CD4-positive, alpha-beta T cell (primary cell): ENCODE measurements at regions of chr19 and their contacts with region 1.

Region 1: DNA sequence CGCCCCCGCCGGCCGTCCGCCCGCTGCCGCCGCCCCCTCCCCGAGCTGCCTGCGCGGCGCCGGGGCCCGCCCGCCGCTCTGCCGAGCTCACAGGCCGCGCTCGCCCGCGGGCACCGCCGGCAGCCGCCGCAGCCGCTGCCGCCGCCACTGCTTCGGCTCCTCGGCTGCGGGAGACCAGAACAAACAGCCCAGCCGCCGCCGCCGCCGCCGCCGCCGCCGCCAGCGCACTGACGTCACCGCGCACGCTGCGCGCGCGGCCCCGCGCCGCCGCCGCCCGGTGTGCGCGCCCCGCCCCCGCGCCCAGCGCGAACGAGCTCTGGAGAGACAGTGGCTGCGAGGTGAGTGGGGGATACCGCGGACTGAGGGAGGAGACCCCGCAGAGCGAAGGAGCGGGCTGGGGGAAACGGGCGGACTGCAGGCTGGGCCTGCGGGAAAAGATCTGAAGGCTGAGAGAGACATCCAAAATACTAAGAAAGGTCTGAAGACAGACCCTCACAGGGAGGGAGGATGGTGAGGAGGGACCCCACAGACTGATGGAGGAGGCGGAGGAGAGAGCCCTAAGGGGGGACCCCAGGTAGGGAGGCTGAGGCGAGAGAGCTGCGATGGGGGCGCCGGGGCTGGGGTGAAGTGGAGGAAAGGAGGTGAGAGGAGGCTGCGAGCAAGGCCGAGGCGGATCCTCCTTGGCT is at the start of gene BRD4:
- DNase-seq: peak; percentile 59 to 92 (median 72)
- ATAC-seq: peak; percentile 63
- H3K4me3 ChIP-seq: peak within 1 kb of the TSS; percentile 90
- H3K4me3 Mint-ChIP-seq: peak within 1 kb of the TSS; percentile 96
- H3K27ac ChIP-seq: peak within 1 kb of the TSS; percentile 51 to 67
- H3K27ac Mint-ChIP-seq: peak within 1 kb of the TSS; percentile 88
- H3K4me1 ChIP-seq: peaks cover 45% of the 10 kb centered on the region
- H3K4me1 Mint-ChIP-seq: peaks cover 47% of the 10 kb centered on the region
- H3K27me3 ChIP-seq: no peaks in the 10 kb centered on the region
- H3K27me3 Mint-ChIP-seq: no peaks in the 10 kb centered on the region
- CTCF ChIP-seq: no peak
- total RNA-seq, gene BRD4: 101 to 102 TPM

Region 2: DNA sequence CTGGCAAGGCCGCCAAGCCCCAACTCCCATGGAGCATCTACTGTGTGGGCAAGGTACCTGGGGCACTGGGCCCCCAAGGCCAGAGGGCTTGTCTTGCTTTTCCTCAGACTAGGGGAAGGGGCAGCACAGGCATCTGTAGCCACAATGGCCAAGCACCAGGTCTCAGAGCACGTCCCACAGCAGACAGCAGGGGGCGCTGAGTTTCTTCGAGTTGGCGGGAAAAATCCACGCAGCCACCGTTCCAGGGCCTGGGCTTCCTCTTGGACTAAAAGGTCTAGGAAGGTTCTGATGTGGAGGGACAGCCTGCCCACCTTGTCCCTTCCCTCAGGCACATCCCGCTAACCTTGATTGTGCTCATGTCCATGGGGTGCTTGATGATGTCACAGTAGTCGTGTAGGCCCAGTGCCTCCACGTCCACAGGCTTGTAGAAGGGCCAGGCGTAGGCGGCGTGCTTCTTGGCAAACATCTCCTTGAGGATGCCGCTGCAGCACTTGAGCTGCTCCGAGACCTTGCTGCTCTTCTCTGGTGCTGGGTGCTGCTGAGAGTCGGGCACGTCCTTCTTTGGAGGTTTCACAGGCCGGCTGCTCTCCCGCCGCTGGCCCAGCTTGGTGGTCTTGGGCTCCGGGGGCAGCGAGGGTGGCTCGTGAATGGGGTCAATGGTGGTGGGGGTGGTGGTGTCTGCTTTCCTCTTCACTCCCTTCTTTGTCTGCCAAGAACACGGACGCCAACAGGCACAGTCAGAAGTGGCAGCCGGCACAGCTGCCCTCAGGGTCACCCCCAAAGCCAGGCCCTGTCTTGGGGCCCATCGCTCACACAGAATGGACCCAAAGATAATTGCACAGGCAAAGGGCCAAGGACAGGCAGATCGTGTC is 68.2 kb before region 1 on chr19:
- CTCF ChIA-PET with region 1: no interaction called
- POLR2A ChIA-PET with region 1: no interaction called
- intact Hi-C with region 1: loop called (anchors 2 to 5 kb)
- DNase-seq: peak; percentile 58 to 82 (median 66)
- ATAC-seq: peak; percentile 80
- H3K4me3 ChIP-seq: no peak overlapping the region
- H3K4me3 Mint-ChIP-seq: no peak overlapping the region
- H3K27ac ChIP-seq: no peak overlapping the region
- H3K27ac Mint-ChIP-seq: no peak overlapping the region
- H3K4me1 ChIP-seq: no peaks in the 10 kb centered on the region
- H3K4me1 Mint-ChIP-seq: peaks cover 13% of the 10 kb centered on the region
- H3K27me3 ChIP-seq: no peaks in the 10 kb centered on the region
- H3K27me3 Mint-ChIP-seq: no peaks in the 10 kb centered on the region
- CTCF ChIP-seq: peak; percentile 75

Region 3: DNA sequence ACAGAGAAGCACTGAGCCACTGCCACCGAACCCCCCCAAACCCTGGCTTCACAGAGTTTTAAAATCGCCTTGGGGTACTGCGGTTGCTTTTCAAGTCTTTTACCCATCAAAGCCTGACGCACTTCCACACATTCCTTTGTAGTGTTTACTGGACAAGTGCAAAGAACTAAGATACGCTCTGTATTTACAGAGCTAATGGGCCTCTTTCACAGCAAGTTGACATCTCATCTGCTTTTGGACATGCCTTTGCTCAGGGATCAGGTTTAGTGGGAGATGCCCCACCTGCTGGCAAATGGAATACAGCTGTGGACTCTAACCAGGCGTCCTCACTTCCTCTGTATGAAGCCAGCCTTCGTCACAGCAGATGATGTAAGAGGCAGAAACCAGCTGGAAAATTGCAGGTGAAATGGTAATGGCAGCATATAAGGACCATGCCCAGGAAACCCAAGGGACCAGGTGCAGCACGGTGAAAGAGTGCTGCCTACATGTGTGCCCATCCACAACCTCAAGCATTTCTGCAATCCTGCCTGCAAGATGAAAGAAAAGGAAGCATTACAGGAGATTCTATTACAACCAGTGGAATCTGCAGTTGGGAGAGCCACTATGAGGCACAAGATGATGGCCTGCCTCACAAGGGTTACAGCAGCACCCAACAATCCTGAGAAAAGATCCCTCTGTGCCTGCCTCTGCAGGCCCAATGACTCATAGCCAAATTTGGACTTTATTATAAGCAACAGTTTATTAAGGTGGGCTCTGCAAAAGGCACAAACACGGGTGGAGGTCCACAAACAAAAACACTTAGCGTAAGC is 34.8 kb before region 1 on chr19:
- CTCF ChIA-PET with region 1: no interaction called
- POLR2A ChIA-PET with region 1: interaction called, 4 read pairs
- intact Hi-C with region 1: loop called (anchors 2 kb)
- DNase-seq: peak in 4 of 14 experiments; percentile 23 to 53 (median 44)
- ATAC-seq: peak; percentile 52
- H3K4me3 ChIP-seq: no peak overlapping the region
- H3K4me3 Mint-ChIP-seq: peak overlapping the region; percentile 81
- H3K27ac ChIP-seq: no peak overlapping the region
- H3K27ac Mint-ChIP-seq: peak overlapping the region; percentile 64
- H3K4me1 ChIP-seq: peaks cover 89% of the 10 kb centered on the region
- H3K4me1 Mint-ChIP-seq: peaks cover 89% of the 10 kb centered on the region
- H3K27me3 ChIP-seq: no peaks in the 10 kb centered on the region
- H3K27me3 Mint-ChIP-seq: no peaks in the 10 kb centered on the region
- CTCF ChIP-seq: no peak

Region 4: GRCh38 chr19:15304140-15304705 is 28.2 kb before region 1 on chr19:
- CTCF ChIA-PET with region 1: no interaction called
- POLR2A ChIA-PET with region 1: interaction called, 3 read pairs
- intact Hi-C with region 1: loop called in 1 of 2 experiments (anchors 1 kb)
- DNase-seq: no peak
- ATAC-seq: peak; percentile 71
- H3K4me3 ChIP-seq: no peak overlapping the region
- H3K4me3 Mint-ChIP-seq: peak overlapping the region; percentile 36
- H3K27ac ChIP-seq: no peak overlapping the region
- H3K27ac Mint-ChIP-seq: peak overlapping the region; percentile 37
- H3K4me1 ChIP-seq: peaks cover 73% of the 10 kb centered on the region
- H3K4me1 Mint-ChIP-seq: peaks cover 76% of the 10 kb centered on the region
- H3K27me3 ChIP-seq: no peaks in the 10 kb centered on the region
- H3K27me3 Mint-ChIP-seq: no peaks in the 10 kb centered on the region
- CTCF ChIP-seq: no peak

Region 5: GRCh38 chr19:15318241-15318691 is 14.2 kb before region 1 on chr19:
- CTCF ChIA-PET with region 1: interaction called, 4 read pairs
- POLR2A ChIA-PET with region 1: interaction called, 13 read pairs
- intact Hi-C with region 1: no loop called
- DNase-seq: peak in 2 of 14 experiments; percentile 67 to 70
- ATAC-seq: peak; percentile 72
- H3K4me3 ChIP-seq: no peak overlapping the region
- H3K4me3 Mint-ChIP-seq: peak overlapping the region; percentile 38
- H3K27ac ChIP-seq: no peak overlapping the region
- H3K27ac Mint-ChIP-seq: peak overlapping the region; percentile 71
- H3K4me1 ChIP-seq: peaks cover 88% of the 10 kb centered on the region
- H3K4me1 Mint-ChIP-seq: peaks cover 89% of the 10 kb centered on the region
- H3K27me3 ChIP-seq: no peaks in the 10 kb centered on the region
- H3K27me3 Mint-ChIP-seq: no peaks in the 10 kb centered on the region
- CTCF ChIP-seq: no peak

Region 6: DNA sequence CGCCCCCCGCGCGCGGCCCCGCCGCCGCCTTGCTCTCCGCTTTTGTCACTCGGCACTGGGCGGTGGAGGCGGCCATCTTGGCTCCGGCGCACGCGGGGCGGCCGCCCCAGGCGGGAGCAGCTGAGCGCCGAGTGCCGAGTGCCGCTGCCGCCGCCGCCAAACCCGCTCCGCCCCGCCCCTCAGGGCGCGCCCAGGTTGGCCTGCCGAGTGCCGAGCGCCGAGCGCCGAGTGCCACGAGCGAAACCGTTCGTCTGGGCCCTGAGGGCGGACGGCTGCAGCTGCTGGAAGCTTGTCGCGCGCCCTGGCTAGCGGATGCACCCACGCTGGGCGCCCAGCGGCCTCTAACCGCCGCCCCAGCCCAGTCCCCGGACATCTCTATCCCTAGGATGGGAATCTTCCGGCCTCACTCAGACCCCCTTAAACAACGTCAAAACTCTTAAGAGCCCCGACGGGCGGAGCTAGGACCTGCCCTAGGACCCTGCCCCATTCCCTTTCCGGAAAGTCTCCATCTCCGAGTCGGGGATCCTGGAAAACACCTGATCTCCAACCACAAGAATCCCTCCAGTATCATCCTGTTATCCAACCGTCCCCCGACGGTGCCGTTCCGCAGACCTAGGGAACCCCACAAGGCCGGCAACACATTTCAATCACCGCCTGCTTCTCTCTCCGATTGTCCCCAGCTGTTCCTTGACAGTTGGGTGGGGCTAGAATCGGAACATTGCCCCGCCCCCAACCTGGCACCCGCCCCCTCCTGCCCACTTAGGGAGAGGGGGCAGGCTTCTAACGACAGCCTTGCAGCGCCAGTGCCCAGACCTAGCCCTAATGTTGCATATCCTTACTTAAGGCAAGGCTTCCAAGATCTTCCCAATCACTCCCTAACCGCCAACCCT is 100.4 kb after region 1 on chr19:
- CTCF ChIA-PET with region 1: no interaction called
- POLR2A ChIA-PET with region 1: no interaction called
- intact Hi-C with region 1: loop called in 1 of 2 experiments (anchors 5 kb)
- DNase-seq: peak; percentile 85 to 97 (median 92)
- ATAC-seq: peak; percentile 94
- H3K4me3 ChIP-seq: peak overlapping the region; percentile 87
- H3K4me3 Mint-ChIP-seq: peak overlapping the region; percentile 90
- H3K27ac ChIP-seq: peak overlapping the region; percentile 40 to 65
- H3K27ac Mint-ChIP-seq: peak overlapping the region; percentile 82
- H3K4me1 ChIP-seq: peaks cover 38% of the 10 kb centered on the region
- H3K4me1 Mint-ChIP-seq: peaks cover 28% of the 10 kb centered on the region
- H3K27me3 ChIP-seq: no peaks in the 10 kb centered on the region
- H3K27me3 Mint-ChIP-seq: no peaks in the 10 kb centered on the region
- CTCF ChIP-seq: no peak